ENCODE measurements at regions of chr12 and their contacts with region 1.

Region 1: GRCh38 chr12:49130151-49131050 is 794 bp downstream of the TUBA1B start:
- DNase-seq: peak; percentile 95
- ATAC-seq: peak; percentile 67
- H3K4me3 Mint-ChIP-seq: peak overlapping the region; percentile 83
- H3K27ac Mint-ChIP-seq: peak overlapping the region; percentile 98
- H3K4me1 Mint-ChIP-seq: peaks cover 28% of the 10 kb centered on the region
- H3K27me3 Mint-ChIP-seq: no peaks in the 10 kb centered on the region
- CTCF ChIP-seq: peak; percentile 95

Region 2: GRCh38 chr12:48969833-48970701 is 160.3 kb before region 1 on chr12:
- CTCF ChIA-PET with region 1: no interaction called
- POLR2A ChIA-PET with region 1: no interaction called
- intact Hi-C with region 1: no loop called
- DNase-seq: peak; percentile 26
- ATAC-seq: peak; percentile 14
- H3K4me3 Mint-ChIP-seq: peak overlapping the region; percentile 17
- H3K27ac Mint-ChIP-seq: no peak overlapping the region
- H3K4me1 Mint-ChIP-seq: peaks cover 48% of the 10 kb centered on the region
- H3K27me3 Mint-ChIP-seq: peaks cover 34% of the 10 kb centered on the region
- CTCF ChIP-seq: no peak

Region 3: DNA sequence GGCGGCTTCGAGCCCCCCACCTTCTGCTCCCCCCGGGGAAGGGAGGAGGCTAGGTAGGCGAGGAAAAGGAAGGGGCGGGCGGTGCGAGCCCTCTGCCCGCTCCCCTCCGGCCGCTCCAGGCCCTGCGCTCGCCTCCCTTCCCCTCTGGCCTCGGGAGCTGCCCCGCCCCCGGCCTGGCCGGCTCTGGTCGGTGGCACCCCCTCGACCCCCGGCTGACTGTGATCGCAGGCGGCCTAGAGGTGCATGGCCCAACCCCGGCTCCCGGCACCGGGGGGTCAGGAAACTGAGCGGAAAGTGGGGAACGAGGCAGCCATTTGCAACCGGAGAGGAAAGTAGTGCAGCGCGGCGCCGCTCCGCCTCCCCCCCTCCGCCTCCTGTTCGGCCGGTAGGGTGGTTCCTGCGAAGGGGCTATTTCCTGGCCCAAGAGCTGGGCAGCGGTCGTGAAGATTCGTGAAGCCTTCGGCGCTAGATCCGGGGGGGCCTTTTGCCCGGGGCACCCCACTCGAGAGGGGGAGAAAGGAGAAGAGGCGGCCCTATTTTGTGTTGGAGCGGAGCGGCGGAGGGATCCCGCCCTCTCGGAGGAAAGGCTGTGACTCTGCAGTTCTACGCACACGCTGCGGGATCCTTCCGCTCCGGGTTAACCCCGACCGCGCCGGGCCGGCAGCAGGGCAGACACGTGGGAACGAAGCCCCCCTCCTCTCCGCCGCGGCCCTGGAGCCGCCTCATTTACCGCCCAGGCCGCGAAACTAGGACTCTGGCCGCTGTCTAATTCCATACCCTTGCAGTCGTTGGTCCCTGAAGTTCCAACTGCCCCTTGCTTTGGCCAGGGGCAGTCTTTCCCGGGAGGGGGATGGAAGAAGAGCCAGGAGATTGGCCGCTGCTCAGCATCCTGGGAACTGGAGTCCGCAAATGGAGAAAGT is 69.9 kb before region 1 on chr12 and contains the start of gene KMT2D:
- CTCF ChIA-PET with region 1: interaction called, 24 read pairs
- POLR2A ChIA-PET with region 1: interaction called, 31 read pairs
- intact Hi-C with region 1: no loop called
- DNase-seq: peak; percentile 92
- ATAC-seq: peak; percentile 76
- H3K4me3 Mint-ChIP-seq: peak within 1 kb of the TSS; percentile 97
- H3K27ac Mint-ChIP-seq: peak within 1 kb of the TSS; percentile 98
- H3K4me1 Mint-ChIP-seq: peaks cover 39% of the 10 kb centered on the region
- H3K27me3 Mint-ChIP-seq: no peaks in the 10 kb centered on the region
- CTCF ChIP-seq: no peak
- total RNA-seq, gene KMT2D: 57.5 to 62.3 TPM

Region 4: DNA sequence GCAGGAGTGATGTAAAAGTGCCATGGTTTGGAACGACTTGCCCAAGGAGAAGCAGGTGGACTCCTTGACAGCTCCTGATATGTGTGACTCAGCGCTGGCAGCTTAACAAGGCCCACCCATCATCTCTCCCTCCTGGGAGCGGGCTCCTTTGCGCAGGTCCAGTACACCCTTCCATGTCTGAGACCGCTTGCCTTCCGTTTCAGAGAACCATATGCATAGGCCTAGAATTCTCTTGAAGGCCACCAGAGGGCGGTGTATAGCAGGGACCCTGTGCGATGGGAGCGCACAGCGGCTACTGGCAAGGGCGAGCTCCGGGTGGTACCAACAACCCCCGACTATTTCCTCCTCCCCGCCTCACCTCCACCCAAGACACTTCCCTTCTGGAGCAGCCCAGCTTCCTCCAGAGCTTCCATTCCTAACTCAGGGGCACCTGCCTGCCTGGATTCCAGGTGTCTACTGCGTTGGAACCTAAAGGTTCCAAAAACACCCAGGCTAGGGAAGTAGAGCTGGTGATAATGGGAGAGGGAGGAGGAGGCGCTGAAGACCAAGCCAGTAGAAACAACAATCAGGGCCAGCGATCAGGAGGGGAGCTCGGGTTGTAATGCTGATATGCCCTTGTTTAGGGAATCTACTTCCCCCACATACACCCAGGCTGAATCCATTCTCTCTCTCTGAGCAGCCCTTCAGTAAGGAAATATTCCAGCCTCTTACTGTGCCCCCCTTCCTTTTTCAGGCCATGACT is 42.0 kb before region 1 on chr12:
- CTCF ChIA-PET with region 1: interaction called, 52 read pairs
- POLR2A ChIA-PET with region 1: interaction called, 34 read pairs
- intact Hi-C with region 1: no loop called
- DNase-seq: peak; percentile 81
- ATAC-seq: peak; percentile 95
- H3K4me3 Mint-ChIP-seq: no peak overlapping the region
- H3K27ac Mint-ChIP-seq: no peak overlapping the region
- H3K4me1 Mint-ChIP-seq: peaks cover 43% of the 10 kb centered on the region
- H3K27me3 Mint-ChIP-seq: peaks cover 46% of the 10 kb centered on the region
- CTCF ChIP-seq: peak; percentile 88

Region 5: GRCh38 chr12:49105608-49106007 is 24.8 kb before region 1 on chr12:
- CTCF ChIA-PET with region 1: interaction called, 6 read pairs
- POLR2A ChIA-PET with region 1: interaction called, 85 read pairs
- intact Hi-C with region 1: no loop called
- DNase-seq: no peak
- ATAC-seq: no peak
- H3K4me3 Mint-ChIP-seq: no peak overlapping the region
- H3K27ac Mint-ChIP-seq: no peak overlapping the region
- H3K4me1 Mint-ChIP-seq: peaks cover 27% of the 10 kb centered on the region
- H3K27me3 Mint-ChIP-seq: no peaks in the 10 kb centered on the region
- CTCF ChIP-seq: no peak

Region 6: DNA sequence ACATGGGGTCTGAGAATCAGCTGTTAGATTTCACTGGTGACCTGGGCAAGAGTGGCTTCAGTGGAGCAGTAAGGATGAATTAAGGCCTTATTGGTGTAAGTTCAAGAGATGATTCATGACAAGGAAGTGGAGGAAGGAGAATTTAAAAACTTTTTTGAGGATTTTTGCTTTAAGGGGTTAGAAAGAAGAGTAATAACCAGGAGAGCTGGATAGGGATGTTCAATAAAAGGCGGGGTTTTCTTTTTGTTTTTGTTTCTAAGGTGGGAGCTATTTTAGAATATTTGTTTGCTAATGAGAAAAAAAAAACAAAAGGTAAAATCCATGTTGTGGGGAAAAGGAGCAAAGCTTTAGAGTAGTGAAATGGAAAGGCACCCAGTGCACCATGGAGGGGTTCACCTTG is 16.0 kb after region 1 on chr12:
- CTCF ChIA-PET with region 1: interaction called, 3 read pairs
- POLR2A ChIA-PET with region 1: interaction called, 26 read pairs
- intact Hi-C with region 1: no loop called
- DNase-seq: no peak
- ATAC-seq: no peak
- H3K4me3 Mint-ChIP-seq: no peak overlapping the region
- H3K27ac Mint-ChIP-seq: no peak overlapping the region
- H3K4me1 Mint-ChIP-seq: peaks cover 2% of the 10 kb centered on the region
- H3K27me3 Mint-ChIP-seq: no peaks in the 10 kb centered on the region
- CTCF ChIP-seq: no peak

Region 7: GRCh38 chr12:49232940-49233841 is 102.8 kb after region 1 on chr12:
- CTCF ChIA-PET with region 1: interaction called, 32 read pairs
- POLR2A ChIA-PET with region 1: interaction called, 19 read pairs
- intact Hi-C with region 1: no loop called
- DNase-seq: no peak
- ATAC-seq: no peak
- H3K4me3 Mint-ChIP-seq: peak overlapping the region; percentile 85
- H3K27ac Mint-ChIP-seq: peak overlapping the region; percentile 55
- H3K4me1 Mint-ChIP-seq: peaks cover 13% of the 10 kb centered on the region
- H3K27me3 Mint-ChIP-seq: no peaks in the 10 kb centered on the region
- CTCF ChIP-seq: no peak

Region 8: GRCh38 chr12:49366652-49367380 is 236.4 kb after region 1 on chr12:
- CTCF ChIA-PET with region 1: interaction called, 3 read pairs
- POLR2A ChIA-PET with region 1: interaction called, 16 read pairs
- intact Hi-C with region 1: no loop called
- DNase-seq: peak; percentile 92
- ATAC-seq: peak; percentile 86
- H3K4me3 Mint-ChIP-seq: peak overlapping the region; percentile 74
- H3K27ac Mint-ChIP-seq: peak overlapping the region; percentile 98
- H3K4me1 Mint-ChIP-seq: peaks cover 29% of the 10 kb centered on the region
- H3K27me3 Mint-ChIP-seq: no peaks in the 10 kb centered on the region
- CTCF ChIP-seq: no peak

Region 9: GRCh38 chr12:49930515-49931288 is 800.3 kb after region 1 on chr12:
- CTCF ChIA-PET with region 1: no interaction called
- POLR2A ChIA-PET with region 1: no interaction called
- intact Hi-C with region 1: no loop called
- DNase-seq: no peak
- ATAC-seq: peak; percentile 71
- H3K4me3 Mint-ChIP-seq: no peak overlapping the region
- H3K27ac Mint-ChIP-seq: no peak overlapping the region
- H3K4me1 Mint-ChIP-seq: peaks cover 7% of the 10 kb centered on the region
- H3K27me3 Mint-ChIP-seq: peaks cover 9% of the 10 kb centered on the region
- CTCF ChIP-seq: no peak

Measured in activated CD8-positive, alpha-beta T cell treated with anti-CD3 and anti-CD28 coated beads for 36 hours (primary cell).